ENCODE measurements at regions of chr6 and their contacts with region 1.

Region 1: DNA sequence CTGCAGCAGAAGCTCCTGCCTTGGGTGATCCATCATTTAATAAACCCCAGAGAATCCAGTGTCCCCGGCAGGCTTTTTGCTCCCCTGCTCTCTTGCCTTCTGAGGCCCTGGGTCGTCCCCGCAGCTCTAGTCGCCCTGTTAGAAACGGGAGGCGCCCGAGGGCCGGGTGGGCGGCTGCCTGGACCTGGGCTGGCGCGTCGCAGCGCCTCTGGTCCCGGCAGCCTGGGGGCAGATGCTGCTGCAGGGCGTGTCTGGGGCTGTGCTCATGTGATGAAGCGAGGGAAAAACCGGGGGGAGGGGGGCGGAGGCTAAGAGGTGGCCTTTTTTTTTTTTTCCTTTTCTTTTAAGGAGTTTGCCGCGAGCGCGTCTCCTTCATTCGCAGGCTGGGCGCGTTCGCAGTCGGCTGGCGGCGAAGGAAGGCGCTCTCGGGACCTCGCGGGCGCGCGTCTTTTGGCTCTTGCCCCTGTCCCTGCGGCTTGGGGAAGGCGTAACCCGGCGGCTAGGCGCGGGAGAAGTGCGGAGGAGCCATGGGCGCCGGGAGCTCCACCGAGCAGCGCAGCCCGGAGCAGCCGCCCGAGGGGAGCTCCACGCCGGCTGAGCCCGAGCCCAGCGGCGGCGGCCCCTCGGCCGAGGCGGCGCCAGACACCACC is 394 bp downstream of the AKAP12 start:
- DNase-seq: peak; percentile 97
- H3K4me3 ChIP-seq: peak overlapping the region; percentile 80 to 95 (median 88)
- H3K27ac ChIP-seq: peak overlapping the region; percentile 95 to 98 (median 97)
- H3K4me1 ChIP-seq: peaks cover 0 to 41% (median 36%) of the 10 kb centered on the region in 4 donors
- H3K27me3 ChIP-seq: no peaks in the 10 kb centered on the region
- CTCF ChIP-seq: peak; percentile 21 to 45 (median 45)
- EP300 ChIP-seq: no peak
- POLR2A ChIP-seq: peak; percentile 21

Region 2: DNA sequence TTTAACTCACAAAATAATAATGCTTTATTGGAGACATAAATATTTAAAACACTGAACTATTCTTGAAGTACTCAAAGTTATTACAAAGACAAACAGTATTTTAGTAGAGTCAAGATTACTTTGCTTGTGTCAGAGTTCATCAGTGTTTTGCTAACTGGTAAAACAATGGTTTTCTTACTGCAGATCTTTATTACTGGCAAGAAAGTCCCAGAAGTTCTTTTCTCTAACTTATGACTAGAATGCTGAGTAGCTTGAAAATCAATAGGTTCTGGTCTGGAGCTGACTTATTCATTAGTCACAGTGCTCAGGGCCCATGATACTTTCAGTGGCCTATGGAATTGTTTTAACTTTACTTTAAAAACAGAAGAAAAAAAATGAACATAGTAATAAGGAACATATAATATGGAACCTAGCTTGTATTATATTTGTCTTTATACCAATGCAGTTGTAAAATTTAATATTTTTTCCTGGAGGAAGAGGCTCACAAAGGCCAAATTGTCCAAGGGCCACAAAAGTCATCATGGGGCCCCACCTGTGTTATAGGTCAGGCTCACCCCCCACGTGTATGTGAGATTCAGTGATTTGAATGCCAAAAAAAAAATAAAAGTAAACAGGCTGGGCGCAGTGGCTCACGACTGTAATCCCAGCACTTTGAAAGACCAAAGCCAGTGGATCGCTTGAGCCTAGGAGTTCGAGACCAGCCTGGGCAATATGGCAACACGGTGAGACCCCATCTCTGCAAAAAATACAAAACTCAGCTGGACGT is 587.1 kb before region 1 on chr6:
- intact Hi-C with region 1: no loop called
- DNase-seq: no peak
- H3K4me3 ChIP-seq: no peak overlapping the region
- H3K27ac ChIP-seq: no peak overlapping the region
- H3K4me1 ChIP-seq: no peaks in the 10 kb centered on the region
- H3K27me3 ChIP-seq: no peaks in the 10 kb centered on the region
- CTCF ChIP-seq: no peak
- EP300 ChIP-seq: no peak
- POLR2A ChIP-seq: no peak

Region 3: GRCh38 chr6:151014404-151015100 is 225.6 kb before region 1 on chr6:
- intact Hi-C with region 1: loop called (anchors 10 kb)
- DNase-seq: no peak
- H3K4me3 ChIP-seq: peak overlapping the region in 1 of 4 donors; percentile 28
- H3K27ac ChIP-seq: peak overlapping the region in 1 of 4 donors; percentile 0
- H3K4me1 ChIP-seq: peaks cover 3 to 18% (median 5%) of the 10 kb centered on the region in 4 donors
- H3K27me3 ChIP-seq: no peaks in the 10 kb centered on the region
- CTCF ChIP-seq: peak; percentile 95 to 99 (median 96)
- EP300 ChIP-seq: no peak
- POLR2A ChIP-seq: no peak

Region 4: GRCh38 chr6:151323791-151324487 is 83.8 kb after region 1 on chr6:
- intact Hi-C with region 1: loop called (anchors 2 kb)
- DNase-seq: peak; percentile 96
- H3K4me3 ChIP-seq: peak overlapping the region in 2 of 4 donors; percentile 13 to 27
- H3K27ac ChIP-seq: peak overlapping the region; percentile 52 to 84 (median 76)
- H3K4me1 ChIP-seq: peaks cover 18 to 32% (median 28%) of the 10 kb centered on the region in 4 donors
- H3K27me3 ChIP-seq: no peaks in the 10 kb centered on the region
- CTCF ChIP-seq: peak in 2 of 3 experiments; percentile 96 to 99
- EP300 ChIP-seq: peak; percentile 83
- POLR2A ChIP-seq: no peak

Measured in esophagus muscularis mucosa (tissue), 4 donors.